Endothelial cell of umbilical vein (primary cell): ENCODE measurements at regions of chr16 and their contacts with region 1.

Region 1: DNA sequence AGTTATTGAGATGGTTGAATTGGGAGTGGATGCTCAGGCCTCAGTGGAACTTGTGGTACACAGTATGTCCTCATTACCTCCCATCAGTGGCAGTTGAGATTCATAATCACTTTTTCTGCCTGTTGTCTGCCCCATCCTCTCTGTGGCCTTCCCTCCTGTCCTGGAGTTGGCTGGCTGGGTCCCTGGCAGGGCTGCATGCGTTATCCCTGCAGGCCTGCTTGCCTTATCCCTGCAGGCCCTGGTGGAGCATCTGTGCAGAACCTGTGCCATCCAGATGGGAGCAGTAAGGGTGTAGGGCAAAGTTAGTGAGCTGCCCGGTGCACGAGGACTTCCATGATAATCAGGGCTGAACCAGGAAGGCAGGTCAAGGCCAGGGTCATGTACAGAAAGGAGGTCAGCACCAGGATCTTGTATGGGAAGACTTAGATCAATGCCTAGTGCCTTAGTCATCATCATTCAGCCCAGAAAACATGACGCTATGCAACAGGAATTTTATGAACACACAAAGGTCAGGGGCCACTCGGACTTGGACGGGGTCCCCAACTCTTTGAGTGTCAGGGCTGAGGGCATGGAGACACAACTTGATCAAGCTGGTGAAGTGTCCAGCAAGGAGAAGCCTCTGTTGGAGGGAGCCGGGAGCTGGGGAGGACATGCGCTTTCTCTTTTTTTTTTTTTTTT is 47.2 kb downstream of the ABCC1 start:
- DNase-seq: peak; percentile 89
- H3K4me3 ChIP-seq: no peak overlapping the region
- H3K27ac ChIP-seq: peak overlapping the region; percentile 91
- H3K4me1 ChIP-seq: peaks cover 50% of the 10 kb centered on the region
- H3K27me3 ChIP-seq: no peaks in the 10 kb centered on the region
- CTCF ChIP-seq: peak in 1 of 2 donors; percentile 7
- POLR2A ChIP-seq: peak; percentile 51

Region 2: GRCh38 chr16:15888072-15888976 is 108.2 kb before region 1 on chr16 and contains the start of gene CEP20:
- CTCF ChIA-PET with region 1: no interaction called
- POLR2A ChIA-PET with region 1: no interaction called
- dilution Hi-C with region 1: no loop called
- intact Hi-C with region 1: loop called (anchors 2 kb)
- DNase-seq: peak; percentile 99
- H3K4me3 ChIP-seq: peak within 1 kb of the TSS; percentile 55 to 97 (median 94)
- H3K27ac ChIP-seq: peak within 1 kb of the TSS; percentile 73
- H3K4me1 ChIP-seq: peaks cover 15% of the 10 kb centered on the region
- H3K27me3 ChIP-seq: no peaks in the 10 kb centered on the region
- CTCF ChIP-seq: peak in 1 of 2 donors; percentile 18
- POLR2A ChIP-seq: peak; percentile 71
- total RNA-seq, gene CEP20: 28.0 and 30.5 TPM in 2 replicates

Region 3: DNA sequence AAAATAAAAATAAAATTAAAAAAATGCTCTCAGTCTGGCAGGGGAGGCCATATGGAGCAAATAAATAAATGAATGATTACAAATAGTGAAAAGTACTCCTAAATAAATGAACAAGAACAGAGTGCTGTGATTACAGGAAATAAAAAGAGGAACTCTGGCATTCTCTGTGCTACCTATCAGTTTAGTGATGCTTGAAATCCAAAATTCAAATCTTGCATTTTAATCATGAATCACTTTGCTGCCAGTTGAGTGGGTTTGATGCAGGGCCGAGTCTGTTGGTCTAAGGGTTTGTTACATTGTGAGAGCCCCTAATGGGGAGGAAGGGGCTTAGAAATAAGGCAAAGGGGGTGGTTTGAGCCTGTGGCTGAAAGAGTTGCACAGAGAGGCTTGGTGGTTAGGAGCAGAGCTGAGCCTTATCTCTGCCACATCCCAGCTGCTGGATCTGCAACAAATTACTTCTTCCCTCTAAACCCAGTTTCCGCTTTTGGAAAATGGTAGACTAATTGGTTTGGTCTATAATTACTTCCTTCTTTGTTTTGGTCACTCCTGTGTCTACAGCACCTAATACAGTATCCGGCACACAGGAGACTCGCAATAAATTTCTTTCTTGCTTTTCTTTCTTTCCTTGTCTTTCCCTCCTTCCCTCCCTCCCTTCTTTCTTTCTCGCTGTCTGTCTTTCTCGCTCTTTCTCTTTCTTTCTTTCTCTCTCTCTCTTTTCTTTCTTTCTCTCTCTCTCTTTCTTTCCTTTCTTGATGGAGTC is 53.5 kb before region 1 on chr16:
- CTCF ChIA-PET with region 1: no interaction called
- POLR2A ChIA-PET with region 1: no interaction called
- dilution Hi-C with region 1: no loop called
- intact Hi-C with region 1: no loop called
- DNase-seq: no peak
- H3K4me3 ChIP-seq: no peak overlapping the region
- H3K27ac ChIP-seq: no peak overlapping the region
- H3K4me1 ChIP-seq: peaks cover 5% of the 10 kb centered on the region
- H3K27me3 ChIP-seq: no peaks in the 10 kb centered on the region
- CTCF ChIP-seq: no peak
- POLR2A ChIP-seq: no peak

Region 4: GRCh38 chr16:15961060-15961511 is 35.5 kb before region 1 on chr16:
- CTCF ChIA-PET with region 1: interaction called, 3 read pairs
- POLR2A ChIA-PET with region 1: interaction called, 5 read pairs
- dilution Hi-C with region 1: no loop called
- intact Hi-C with region 1: loop called (anchors 2 kb)
- DNase-seq: peak; percentile 77
- H3K4me3 ChIP-seq: no peak overlapping the region
- H3K27ac ChIP-seq: peak overlapping the region; percentile 43
- H3K4me1 ChIP-seq: peaks cover 49% of the 10 kb centered on the region
- H3K27me3 ChIP-seq: no peaks in the 10 kb centered on the region
- CTCF ChIP-seq: no peak
- POLR2A ChIP-seq: no peak

Region 5: GRCh38 chr16:16021988-16022682 is 25.6 kb after region 1 on chr16:
- CTCF ChIA-PET with region 1: interaction called, 7 read pairs
- POLR2A ChIA-PET with region 1: interaction called, 9 read pairs
- dilution Hi-C with region 1: no loop called
- intact Hi-C with region 1: loop called (anchors 1 kb)
- DNase-seq: peak; percentile 96
- H3K4me3 ChIP-seq: no peak overlapping the region
- H3K27ac ChIP-seq: peak overlapping the region; percentile 91
- H3K4me1 ChIP-seq: peaks cover 35% of the 10 kb centered on the region
- H3K27me3 ChIP-seq: no peaks in the 10 kb centered on the region
- CTCF ChIP-seq: no peak
- POLR2A ChIP-seq: peak; percentile 33

Region 6: GRCh38 chr16:16027728-16028310 is 31.2 kb after region 1 on chr16:
- CTCF ChIA-PET with region 1: interaction called, 7 read pairs
- POLR2A ChIA-PET with region 1: interaction called, 9 read pairs
- dilution Hi-C with region 1: no loop called
- intact Hi-C with region 1: loop called (anchors 1 kb)
- DNase-seq: peak; percentile 77
- H3K4me3 ChIP-seq: no peak overlapping the region
- H3K27ac ChIP-seq: peak overlapping the region; percentile 71
- H3K4me1 ChIP-seq: peaks cover 37% of the 10 kb centered on the region
- H3K27me3 ChIP-seq: no peaks in the 10 kb centered on the region
- CTCF ChIP-seq: no peak
- POLR2A ChIP-seq: no peak

Region 7: DNA sequence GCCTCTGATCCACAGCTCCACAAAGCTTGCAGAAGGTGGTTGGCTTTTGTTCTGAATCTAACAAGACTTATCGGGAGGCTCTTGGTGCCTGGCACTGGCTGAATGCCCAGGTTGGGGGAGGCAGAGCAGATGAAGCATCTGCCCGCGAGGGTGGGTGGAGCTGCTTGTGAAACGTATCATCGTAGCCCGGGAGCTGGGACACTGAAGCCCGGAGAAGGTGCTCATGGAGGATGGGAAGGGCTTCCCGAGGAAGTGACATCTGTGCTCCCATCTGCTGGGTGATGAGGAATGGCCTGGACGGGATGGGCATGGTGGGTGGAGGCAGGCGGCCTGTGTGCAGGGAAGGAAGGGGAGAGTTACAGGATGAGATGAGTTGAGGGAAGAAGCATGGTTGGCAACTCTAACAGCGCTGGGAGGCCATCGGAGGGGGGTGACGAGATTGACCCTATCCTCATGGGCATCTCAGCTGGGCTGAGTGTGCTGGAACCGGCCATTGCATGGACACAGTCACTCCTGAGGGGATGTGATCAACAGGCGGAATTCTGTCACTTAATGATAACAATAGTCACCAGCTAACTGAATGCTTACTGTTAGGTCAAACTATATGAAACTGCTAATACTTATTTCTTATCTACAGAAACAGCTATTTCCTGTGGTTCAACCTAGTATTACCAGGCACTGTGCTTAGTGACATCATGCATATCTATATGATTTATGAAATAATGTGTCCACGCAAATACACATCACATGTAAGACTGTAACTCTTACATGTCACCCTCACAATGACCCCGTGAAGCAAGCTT is 124.0 kb after region 1 on chr16:
- CTCF ChIA-PET with region 1: no interaction called
- POLR2A ChIA-PET with region 1: interaction called, 10 read pairs
- dilution Hi-C with region 1: no loop called
- intact Hi-C with region 1: loop called (anchors 1 kb)
- DNase-seq: peak; percentile 98
- H3K4me3 ChIP-seq: peak overlapping the region in 1 of 3 experiments; percentile 4
- H3K27ac ChIP-seq: peak overlapping the region; percentile 83
- H3K4me1 ChIP-seq: peaks cover 19% of the 10 kb centered on the region
- H3K27me3 ChIP-seq: no peaks in the 10 kb centered on the region
- CTCF ChIP-seq: no peak
- POLR2A ChIP-seq: peak; percentile 81